ENCODE measurements at regions of chr17 and their contacts with region 1.

Region 1: DNA sequence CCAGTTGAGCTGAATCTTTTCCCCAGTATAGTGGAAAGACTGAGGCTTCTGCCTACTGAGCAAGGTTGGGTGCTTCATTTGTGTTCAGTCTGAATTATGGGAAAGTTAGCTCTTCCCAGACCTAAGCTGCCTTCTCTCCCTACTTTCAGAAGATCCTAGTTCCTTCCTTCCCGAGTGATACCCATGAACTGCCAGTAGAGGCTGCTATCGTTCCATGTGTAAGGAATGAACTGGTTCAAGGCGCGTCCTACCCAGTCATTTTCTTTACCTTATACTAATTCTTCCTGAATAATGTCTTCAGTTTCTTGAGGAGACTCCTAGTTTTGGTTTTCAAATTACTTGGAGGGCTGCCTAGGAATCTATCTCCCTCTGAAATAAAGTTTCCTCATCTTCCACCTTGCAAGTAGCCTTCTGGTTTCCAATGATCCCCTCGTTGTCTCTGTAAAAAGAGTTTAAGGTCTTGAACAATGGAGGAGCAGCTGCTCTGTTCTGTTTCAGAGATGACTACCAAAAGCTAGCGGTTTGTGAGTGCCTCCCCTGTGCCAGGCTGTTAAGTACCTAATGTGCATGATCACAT is 934 bp upstream of the AOC2 start:
- DNase-seq: no peak
- H3K4me3 ChIP-seq: no peak overlapping the region
- H3K27ac ChIP-seq: peak overlapping the region; percentile 34 to 56 (median 53)
- H3K4me1 ChIP-seq: peaks cover 15 to 31% (median 25%) of the 10 kb centered on the region in 4 donors
- H3K27me3 ChIP-seq: no peaks in the 10 kb centered on the region
- CTCF ChIP-seq: peak; percentile 92 to 98 (median 95)
- EP300 ChIP-seq: no peak
- POLR2A ChIP-seq: no peak

Region 2: DNA sequence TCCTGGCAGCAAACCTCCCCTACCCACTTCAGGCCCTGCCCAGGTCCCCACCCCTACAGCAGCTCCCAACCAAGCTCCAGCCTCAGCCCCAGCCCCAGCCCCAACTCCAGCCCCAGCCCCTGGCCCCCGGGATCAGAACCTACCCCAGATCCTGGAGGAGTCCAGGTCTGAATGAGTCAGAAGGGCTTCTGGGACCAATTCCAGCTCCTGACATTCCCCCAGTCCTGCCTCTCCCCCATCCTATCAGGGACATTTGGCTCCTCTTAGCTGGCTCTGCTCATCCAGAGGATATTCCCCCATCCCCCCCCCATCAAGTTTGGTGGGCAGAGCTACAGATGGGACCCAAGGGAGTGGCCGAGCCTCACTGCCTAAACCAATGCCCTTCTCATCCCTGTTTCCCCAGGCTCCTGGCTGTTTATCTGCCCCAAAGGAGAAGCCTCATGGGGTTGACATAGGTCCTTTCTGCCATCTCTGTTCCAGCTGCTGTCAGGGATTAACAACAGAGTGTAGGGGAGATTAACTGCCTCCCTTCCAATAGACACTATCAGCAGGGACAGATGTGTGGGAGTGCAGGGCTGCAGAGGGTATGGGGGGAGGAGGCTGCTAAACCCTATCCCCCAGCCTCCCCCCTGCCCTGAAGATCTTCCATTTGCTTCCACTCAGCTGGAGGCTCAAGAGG is 144.6 kb before region 1 on chr17:
- intact Hi-C with region 1: no loop called
- DNase-seq: no peak
- H3K4me3 ChIP-seq: no peak overlapping the region
- H3K27ac ChIP-seq: peak overlapping the region in 3 of 4 donors; percentile 12 to 57 (median 40)
- H3K4me1 ChIP-seq: peaks cover 9 to 14% (median 13%) of the 10 kb centered on the region in 4 donors
- H3K27me3 ChIP-seq: no peaks in the 10 kb centered on the region
- CTCF ChIP-seq: no peak
- EP300 ChIP-seq: no peak
- POLR2A ChIP-seq: no peak

Region 3: DNA sequence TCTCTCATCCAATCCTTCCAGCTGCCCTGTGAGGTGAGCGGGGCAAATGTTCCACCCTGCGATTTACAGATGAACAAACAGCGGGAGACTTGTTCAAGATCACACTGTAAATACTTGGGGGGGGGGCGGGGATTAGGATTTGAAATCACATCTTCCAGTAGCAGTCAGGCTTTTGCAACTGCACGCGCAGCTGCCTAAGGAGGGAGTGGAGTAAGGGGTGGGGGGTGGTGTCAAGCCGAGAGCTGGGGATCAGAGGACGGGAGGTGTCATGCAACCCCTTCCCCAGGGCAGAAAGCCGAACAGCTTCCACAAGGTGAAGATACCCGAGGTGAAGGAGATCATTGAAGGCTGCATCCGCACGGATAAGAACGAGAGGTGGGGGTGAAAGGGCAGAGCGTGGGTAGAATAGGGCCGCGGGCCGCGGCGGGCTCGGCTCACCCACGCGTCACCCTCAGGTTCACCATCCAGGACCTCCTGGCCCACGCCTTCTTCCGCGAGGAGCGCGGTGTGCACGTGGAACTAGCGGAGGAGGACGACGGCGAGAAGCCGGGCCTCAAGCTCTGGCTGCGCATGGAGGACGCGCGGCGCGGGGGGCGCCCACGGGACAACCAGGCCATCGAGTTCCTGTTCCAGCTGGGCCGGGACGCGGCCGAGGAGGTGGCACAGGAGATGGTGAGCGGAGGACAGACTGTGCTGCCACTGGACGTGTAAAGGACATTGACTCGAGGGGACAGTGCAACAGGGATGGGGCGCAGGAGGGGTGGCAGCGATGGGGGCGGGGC is 58.4 kb before region 1 on chr17:
- intact Hi-C with region 1: no loop called
- DNase-seq: no peak
- H3K4me3 ChIP-seq: no peak overlapping the region
- H3K27ac ChIP-seq: no peak overlapping the region
- H3K4me1 ChIP-seq: peaks cover 20 to 52% (median 46%) of the 10 kb centered on the region in 4 donors
- H3K27me3 ChIP-seq: peaks cover 0 to 77% (median 16%) of the 10 kb centered on the region in 4 donors
- CTCF ChIP-seq: no peak
- EP300 ChIP-seq: no peak
- POLR2A ChIP-seq: no peak

Region 4: DNA sequence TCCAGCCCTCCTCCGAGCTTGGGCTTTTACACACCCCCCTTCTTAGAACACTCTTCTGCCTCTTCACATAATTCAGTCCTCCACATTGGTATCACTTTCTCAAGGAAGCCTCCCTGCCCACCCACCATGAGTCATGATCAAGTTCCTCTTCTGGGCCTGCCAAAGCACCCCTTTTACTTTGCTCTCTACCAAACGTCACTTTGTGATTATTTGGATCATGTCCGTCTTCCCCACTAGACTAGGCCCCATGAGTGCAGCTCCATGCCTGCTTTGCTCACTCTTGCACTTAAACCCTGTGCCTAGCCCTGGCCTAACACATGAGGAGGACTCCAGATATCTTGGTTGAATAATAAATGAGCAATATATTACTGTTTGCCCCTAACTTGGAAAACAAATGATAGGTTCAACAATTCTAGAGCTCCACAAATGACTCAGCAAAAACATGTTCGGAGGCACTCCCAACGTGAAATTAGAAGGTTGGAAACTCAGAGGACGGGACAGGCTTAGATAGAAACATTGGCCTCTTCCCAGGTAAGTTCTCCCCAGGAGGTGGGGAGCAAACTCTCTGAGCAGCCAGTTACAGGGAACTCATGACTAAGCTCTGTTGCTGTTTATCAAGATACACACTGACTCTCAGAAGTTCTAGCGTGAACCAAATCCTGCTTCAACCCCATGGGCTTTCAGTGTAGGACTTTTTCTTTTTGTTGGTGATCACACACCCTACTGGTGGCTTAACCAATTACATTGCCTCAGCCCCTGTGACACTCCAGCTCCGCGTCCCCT is 85.5 kb after region 1 on chr17:
- intact Hi-C with region 1: loop called (anchors 2 kb)
- DNase-seq: peak; percentile 93
- H3K4me3 ChIP-seq: peak overlapping the region in 1 of 4 donors; percentile 9
- H3K27ac ChIP-seq: peak overlapping the region; percentile 73 to 85 (median 84)
- H3K4me1 ChIP-seq: peaks cover 9 to 16% (median 13%) of the 10 kb centered on the region in 4 donors
- H3K27me3 ChIP-seq: no peaks in the 10 kb centered on the region
- CTCF ChIP-seq: peak; percentile 71 to 93 (median 76)
- EP300 ChIP-seq: no peak
- POLR2A ChIP-seq: no peak

Region 5: DNA sequence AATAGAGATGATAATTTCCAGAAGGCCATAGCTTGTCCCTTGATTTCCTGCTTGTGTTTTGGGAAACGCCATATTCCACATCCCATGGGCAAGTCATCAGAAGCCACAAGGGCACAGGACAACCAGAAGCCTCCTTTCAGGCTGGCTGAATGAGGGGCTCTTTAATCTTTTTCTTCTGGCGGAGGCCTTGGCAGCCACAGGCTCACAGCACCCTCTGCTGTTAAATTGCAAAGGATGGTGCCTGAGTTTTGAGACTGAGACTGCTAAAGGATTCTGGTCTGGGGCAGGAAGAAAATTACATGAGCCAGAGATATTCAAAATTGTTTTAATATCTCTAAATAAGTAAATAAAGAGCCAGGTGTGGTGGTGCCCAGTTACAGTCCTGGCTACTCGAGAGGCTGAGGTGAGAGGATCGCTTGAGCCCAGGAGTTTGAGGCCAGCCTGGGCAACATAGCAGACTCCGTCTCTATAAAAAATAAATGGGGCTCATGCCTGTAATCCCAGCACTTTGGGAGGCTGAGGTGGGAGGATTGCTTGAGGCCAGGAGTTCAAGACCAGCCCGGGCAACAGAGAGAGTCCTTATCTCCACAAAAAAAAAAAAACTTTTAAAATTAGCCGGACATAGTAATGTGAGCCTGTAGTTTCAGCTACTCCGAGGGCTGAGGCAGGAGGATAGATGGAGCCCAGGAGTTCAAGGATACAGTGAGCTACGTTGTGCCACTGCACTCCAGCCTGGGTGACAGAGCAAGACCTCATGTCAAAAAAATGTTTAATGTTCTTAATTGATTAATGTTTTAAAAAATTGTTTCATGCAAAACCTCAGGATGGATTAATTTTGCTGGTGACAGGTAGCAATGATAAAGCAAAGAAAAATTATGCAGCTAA is 94.5 kb after region 1 on chr17:
- intact Hi-C with region 1: loop called (anchors 2 kb)
- DNase-seq: no peak
- H3K4me3 ChIP-seq: no peak overlapping the region
- H3K27ac ChIP-seq: no peak overlapping the region
- H3K4me1 ChIP-seq: peaks cover 0 to 6% (median 0%) of the 10 kb centered on the region in 4 donors
- H3K27me3 ChIP-seq: no peaks in the 10 kb centered on the region
- CTCF ChIP-seq: peak; percentile 63 to 72 (median 68)
- EP300 ChIP-seq: no peak
- POLR2A ChIP-seq: no peak